ENCODE measurements at regions of chr16 and their contacts with region 1.

Region 1: DNA sequence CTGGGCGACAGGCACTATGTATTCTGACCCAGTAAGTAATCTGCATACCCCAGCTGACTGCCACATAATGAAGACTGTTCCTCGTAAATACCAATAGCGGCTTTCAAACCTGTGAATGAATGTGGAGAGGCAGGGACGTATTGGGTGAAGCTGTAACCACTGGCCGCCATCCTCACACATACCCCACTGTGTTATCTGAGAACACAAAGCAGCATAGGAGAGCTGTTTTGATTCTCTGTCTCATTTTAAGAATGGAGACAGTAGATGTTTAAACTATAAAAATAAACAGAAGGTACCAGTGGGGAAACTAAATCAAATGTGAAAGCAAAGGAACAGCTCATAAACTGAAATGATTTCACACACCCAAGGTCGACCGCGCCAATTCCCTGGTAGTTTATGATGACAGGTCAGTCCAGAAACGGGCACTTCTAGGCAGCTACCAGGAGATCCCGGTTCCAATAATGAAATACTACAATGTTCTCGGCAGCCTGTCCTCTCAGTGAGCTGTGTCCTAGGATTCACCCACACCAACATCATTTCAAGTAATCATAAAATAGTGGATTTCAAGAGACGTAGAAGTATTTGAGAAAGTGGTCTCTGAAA is 109.7 kb downstream of the ADCY9 start:
- DNase-seq: no peak
- H3K4me3 ChIP-seq: no peak overlapping the region
- H3K27ac ChIP-seq: no peak overlapping the region
- H3K4me1 ChIP-seq: peaks cover 2% of the 10 kb centered on the region
- H3K27me3 ChIP-seq: no peaks in the 10 kb centered on the region
- CTCF ChIP-seq: no peak
- POLR2A ChIP-seq: no peak

Region 2: GRCh38 chr16:4032768-4033167 is 26.3 kb after region 1 on chr16:
- intact Hi-C with region 1: loop called (anchors 2 kb)
- DNase-seq: no peak
- H3K4me3 ChIP-seq: no peak overlapping the region
- H3K27ac ChIP-seq: no peak overlapping the region
- H3K4me1 ChIP-seq: peaks cover 13% of the 10 kb centered on the region
- H3K27me3 ChIP-seq: no peaks in the 10 kb centered on the region
- CTCF ChIP-seq: no peak
- POLR2A ChIP-seq: no peak

Measured in vagina (tissue), 2 donors.